ENCODE measurements at regions of chr16 and their contacts with region 1.

Region 1: DNA sequence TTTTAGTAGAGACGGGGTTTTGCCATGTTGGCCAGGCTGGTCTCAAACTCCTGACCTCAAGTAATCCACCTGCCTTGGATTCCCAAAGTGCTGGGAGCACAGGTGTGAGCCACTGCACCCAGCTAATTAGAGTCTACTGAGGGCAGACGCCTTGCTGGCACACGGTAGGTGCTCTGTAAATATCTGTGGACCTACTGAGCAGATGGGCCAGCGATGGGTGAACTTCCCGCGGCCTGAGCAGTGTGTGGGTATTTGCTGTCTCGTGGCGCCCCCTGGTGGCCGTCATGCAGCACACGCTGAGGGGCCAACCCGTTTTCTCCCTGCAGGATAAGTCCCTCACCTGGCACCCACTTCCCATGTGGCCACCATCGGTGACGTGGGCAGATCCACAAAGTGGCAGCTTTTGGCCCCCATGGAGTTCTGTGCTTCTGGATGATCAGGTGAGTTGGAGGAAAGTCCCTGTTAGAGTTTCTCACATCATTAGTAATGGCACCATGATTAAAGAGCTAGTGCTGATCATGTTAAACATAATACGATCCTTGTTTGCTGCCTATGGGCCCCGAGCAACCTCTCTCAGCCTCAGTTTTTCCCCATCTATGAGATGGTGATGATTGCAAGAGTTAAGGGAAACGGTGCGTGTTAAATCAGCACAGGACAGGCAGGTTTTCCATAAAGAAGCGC is 40.7 kb downstream of the ZDHHC7 start:
- DNase-seq: peak; percentile 82 to 89
- ATAC-seq: peak; percentile 85 to 94
- H3K4me3 ChIP-seq: no peak overlapping the region
- H3K27ac ChIP-seq: peak overlapping the region; percentile 18 to 82; a peak in 5 of 6 replicates
- H3K4me1 ChIP-seq: peaks cover 15% of the 10 kb centered on the region
- CTCF ChIP-seq: peak; percentile 94
- EP300 ChIP-seq: no peak
- POLR2A ChIP-seq: no peak
- RAD21 ChIP-seq: peak; percentile 95

Region 2: GRCh38 chr16:84617791-84618580 is 352.6 kb before region 1 on chr16 and contains the start of gene COTL1:
- CTCF ChIA-PET with region 1: interaction called, 20 read pairs
- POLR2A ChIA-PET with region 1: no interaction called
- DNase-seq: peak; percentile 88 to 98
- ATAC-seq: peak; percentile 63 to 69
- H3K4me3 ChIP-seq: peak within 1 kb of the TSS; percentile 92
- H3K27ac ChIP-seq: peak within 1 kb of the TSS; percentile 82 to 98
- H3K4me1 ChIP-seq: peaks cover 49% of the 10 kb centered on the region
- CTCF ChIP-seq: no peak
- EP300 ChIP-seq: no peak
- POLR2A ChIP-seq: peak; percentile 99
- RAD21 ChIP-seq: no peak
- polyA plus RNA-seq, gene COTL1: 89.7 and 94.1 TPM in 2 replicates

Region 3: GRCh38 chr16:84754353-84754856 is 216.2 kb before region 1 on chr16:
- CTCF ChIA-PET with region 1: interaction called, 452 read pairs
- POLR2A ChIA-PET with region 1: interaction called, 3 read pairs
- DNase-seq: peak; percentile 78 to 86
- ATAC-seq: peak; percentile 88 to 90
- H3K4me3 ChIP-seq: no peak overlapping the region
- H3K27ac ChIP-seq: no peak overlapping the region
- H3K4me1 ChIP-seq: peaks cover 25% of the 10 kb centered on the region
- CTCF ChIP-seq: peak; percentile 89
- EP300 ChIP-seq: no peak
- POLR2A ChIP-seq: no peak
- RAD21 ChIP-seq: peak; percentile 79 to 86

Region 4: GRCh38 chr16:84795329-84796053 is 175.1 kb before region 1 on chr16:
- CTCF ChIA-PET with region 1: interaction called, 14 read pairs
- POLR2A ChIA-PET with region 1: no interaction called
- DNase-seq: no peak
- ATAC-seq: no peak; a peak in 1 of 6 replicates
- H3K4me3 ChIP-seq: no peak overlapping the region
- H3K27ac ChIP-seq: no peak overlapping the region
- H3K4me1 ChIP-seq: no peaks in the 10 kb centered on the region
- CTCF ChIP-seq: no peak
- EP300 ChIP-seq: no peak
- POLR2A ChIP-seq: no peak
- RAD21 ChIP-seq: no peak

Region 5: DNA sequence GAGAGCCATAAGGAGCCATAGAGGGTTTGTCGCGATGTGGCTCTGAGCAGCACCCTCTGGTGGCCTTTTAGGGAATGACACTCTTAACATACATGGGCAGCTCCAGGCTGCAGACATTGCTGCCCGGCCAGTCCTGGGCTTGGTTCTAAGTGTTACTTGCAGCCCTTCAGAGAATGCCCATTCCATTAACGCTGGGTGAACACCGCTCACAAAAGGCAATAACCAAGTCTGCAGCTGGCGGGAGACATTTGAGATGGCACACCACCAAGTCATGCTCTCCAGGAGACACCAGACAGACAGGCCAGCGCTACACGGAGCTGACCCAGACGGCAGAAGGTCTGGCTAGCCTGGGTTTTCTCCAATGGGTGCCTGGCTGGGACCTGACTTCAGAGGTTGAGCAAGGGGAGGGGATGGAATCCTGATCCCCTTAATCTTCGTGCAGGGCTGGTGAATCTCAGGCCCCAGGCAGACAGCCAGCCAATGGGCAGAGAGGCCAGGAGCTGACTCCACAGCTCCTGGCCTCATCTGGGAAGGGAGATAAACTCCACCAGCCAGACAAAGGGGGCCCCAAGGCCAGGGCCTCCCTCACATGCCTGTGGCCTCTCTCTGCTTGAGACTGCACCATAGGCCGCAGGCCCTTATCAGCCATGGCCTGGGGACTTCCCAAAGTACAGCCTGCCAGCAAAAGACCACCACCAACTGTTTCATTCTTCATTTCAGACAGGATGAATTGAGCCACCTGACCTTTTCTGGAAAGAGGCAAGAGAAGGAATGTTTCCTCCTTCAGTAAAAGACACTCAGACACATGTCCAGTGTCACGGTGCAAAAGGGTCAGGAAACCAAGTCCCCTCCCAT is 18.0 kb before region 1 on chr16:
- CTCF ChIA-PET with region 1: interaction called, 184 read pairs
- POLR2A ChIA-PET with region 1: no interaction called
- DNase-seq: peak; percentile 80
- ATAC-seq: peak; percentile 89 to 97
- H3K4me3 ChIP-seq: no peak overlapping the region
- H3K27ac ChIP-seq: no peak overlapping the region
- H3K4me1 ChIP-seq: no peaks in the 10 kb centered on the region
- CTCF ChIP-seq: peak; percentile 78
- EP300 ChIP-seq: no peak
- POLR2A ChIP-seq: no peak
- RAD21 ChIP-seq: peak; percentile 68 to 81

Region 6: DNA sequence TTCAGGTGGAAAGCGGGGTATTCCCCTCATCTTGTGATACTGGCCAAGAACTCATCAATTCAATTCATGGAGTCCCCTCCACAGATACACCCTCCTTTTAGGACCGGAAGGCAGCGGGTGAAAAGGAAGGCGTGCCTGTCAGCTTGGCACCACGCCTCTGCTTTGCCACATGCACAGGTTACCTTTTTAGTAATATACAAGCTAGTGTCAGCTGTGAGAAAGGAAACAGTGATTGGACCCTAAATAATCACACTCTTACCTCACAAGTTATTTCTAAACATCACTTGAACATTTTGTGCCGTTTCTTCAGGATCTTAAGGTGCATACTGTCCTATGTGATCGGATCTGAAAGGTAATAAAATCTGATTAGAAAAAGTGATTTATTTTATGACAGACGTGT is 25.1 kb after region 1 on chr16:
- CTCF ChIA-PET with region 1: interaction called, 37 read pairs
- POLR2A ChIA-PET with region 1: interaction called, 7 read pairs
- DNase-seq: no peak
- ATAC-seq: no peak
- H3K4me3 ChIP-seq: peak overlapping the region; percentile 15; the same call in 1 of the 3 replicates
- H3K27ac ChIP-seq: peak overlapping the region; percentile 94 to 96
- H3K4me1 ChIP-seq: peaks cover 71% of the 10 kb centered on the region
- CTCF ChIP-seq: no peak
- EP300 ChIP-seq: no peak
- POLR2A ChIP-seq: no peak
- RAD21 ChIP-seq: no peak

Region 7: DNA sequence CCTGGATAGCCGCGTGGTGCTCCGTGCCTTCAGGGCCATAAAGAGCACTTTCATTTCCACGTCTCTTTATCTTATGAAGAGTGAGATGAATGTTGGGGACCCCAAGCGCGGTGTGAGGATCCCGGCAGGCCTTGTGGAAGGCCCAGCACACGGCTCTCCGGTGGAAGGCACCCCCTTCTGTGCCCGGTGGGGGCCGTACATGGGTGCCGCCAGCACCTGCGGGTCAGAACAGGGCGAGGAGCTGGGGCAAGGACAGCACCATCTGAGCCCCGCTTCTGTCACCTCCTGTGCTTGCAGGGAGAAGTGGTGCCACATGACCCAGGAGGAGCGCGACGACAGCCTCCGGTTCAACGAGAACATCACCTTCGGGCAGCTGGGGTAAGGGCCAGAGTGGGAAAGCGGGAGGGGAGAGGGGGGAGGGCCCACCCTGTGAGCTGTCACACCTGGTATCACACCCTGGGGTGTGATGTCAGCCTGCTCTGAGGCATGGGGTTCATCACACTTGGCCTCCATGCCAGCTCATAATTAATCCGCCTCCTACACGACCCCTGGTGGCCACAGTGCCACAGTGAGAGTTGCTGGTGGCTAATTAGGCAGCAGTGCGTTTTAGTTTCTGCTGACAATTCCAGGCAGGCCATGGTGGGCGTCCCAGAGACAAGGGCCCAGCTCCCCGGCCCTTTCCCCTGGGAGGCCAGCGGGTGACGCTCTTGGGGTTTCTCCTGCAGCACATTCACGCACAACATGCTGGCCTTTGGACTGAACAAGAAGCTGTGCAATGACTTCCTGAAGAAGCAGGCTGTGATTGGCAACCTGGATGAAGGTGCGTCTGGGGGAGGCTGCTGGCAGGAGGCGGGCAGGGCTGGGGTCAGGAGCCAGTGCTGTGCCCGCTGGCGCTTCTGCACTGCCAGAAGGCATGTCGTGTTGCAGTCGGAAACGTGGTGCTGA is 116.0 kb after region 1 on chr16:
- CTCF ChIA-PET with region 1: interaction called, 20 read pairs
- POLR2A ChIA-PET with region 1: interaction called, 3 read pairs
- DNase-seq: peak; percentile 70 to 95
- ATAC-seq: peak; percentile 75 to 91
- H3K4me3 ChIP-seq: no peak overlapping the region
- H3K27ac ChIP-seq: peak overlapping the region; percentile 41 to 71; a peak in 4 of 6 replicates
- H3K4me1 ChIP-seq: peaks cover 4% of the 10 kb centered on the region; the same call in 2 of the 3 replicates
- CTCF ChIP-seq: peak; percentile 74
- EP300 ChIP-seq: no peak
- POLR2A ChIP-seq: no peak
- RAD21 ChIP-seq: peak; percentile 76 to 80

Region 8: DNA sequence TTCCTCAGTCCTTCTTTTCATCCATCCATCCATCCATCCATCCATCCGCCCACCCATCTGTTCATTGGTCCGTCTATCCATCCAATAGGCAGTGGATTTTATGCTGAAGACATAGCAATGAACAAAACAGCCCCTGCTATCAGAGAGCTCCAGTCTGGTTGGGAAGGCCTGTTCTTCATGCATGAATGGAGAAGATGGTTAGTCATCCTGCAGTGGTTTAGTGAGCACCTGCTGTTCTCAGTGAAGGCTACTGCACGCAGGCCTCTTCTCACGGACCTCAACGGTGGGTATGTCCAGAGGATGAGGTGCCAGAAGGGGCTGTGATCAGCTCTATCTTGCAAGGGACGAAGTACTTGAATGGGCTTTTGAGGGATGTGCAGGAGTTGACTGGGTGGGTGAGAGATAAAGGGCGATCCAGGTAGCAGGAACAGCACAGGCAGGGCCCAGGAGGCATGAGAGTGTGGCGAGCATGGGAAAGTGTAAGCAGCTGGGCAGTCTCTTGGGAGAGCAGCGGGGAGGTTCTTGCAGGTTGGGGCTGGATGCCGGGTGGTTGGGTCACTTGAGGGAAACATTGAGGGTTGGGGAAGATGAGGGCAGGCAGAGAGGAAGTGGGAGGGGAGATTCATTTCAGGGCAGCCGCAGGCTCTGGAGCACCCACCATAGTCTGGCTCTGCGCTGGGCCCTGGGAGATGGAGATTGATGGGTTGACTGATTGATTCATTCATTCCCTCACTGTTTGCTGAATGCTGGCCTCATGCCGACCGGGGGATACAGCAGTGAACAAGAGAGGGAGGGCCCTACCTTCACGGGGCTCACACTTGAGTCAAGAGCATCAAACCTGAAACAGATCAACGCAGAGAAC is 256.7 kb after region 1 on chr16:
- CTCF ChIA-PET with region 1: no interaction called
- POLR2A ChIA-PET with region 1: no interaction called
- DNase-seq: no peak
- ATAC-seq: no peak
- H3K4me3 ChIP-seq: no peak overlapping the region
- H3K27ac ChIP-seq: no peak overlapping the region
- H3K4me1 ChIP-seq: no peaks in the 10 kb centered on the region
- CTCF ChIP-seq: no peak
- EP300 ChIP-seq: no peak
- POLR2A ChIP-seq: no peak
- RAD21 ChIP-seq: no peak